Calu3 (cell line): ENCODE measurements at regions of chr18 and their contacts with region 1.

Region 1: GRCh38 chr18:35730691-35731370 is 149.3 kb downstream of the GALNT1 start:
- DNase-seq: peak; percentile 23
- H3K4me3 Mint-ChIP-seq: peak overlapping the region; percentile 66
- H3K27ac Mint-ChIP-seq: peak overlapping the region; percentile 55
- H3K4me1 Mint-ChIP-seq: peaks cover 32% of the 10 kb centered on the region
- H3K27me3 Mint-ChIP-seq: no peaks in the 10 kb centered on the region
- CTCF ChIP-seq: no peak

Region 2: GRCh38 chr18:35296060-35296459 is 434.8 kb before region 1 on chr18:
- CTCF ChIA-PET with region 1: no interaction called
- intact Hi-C with region 1: no loop called
- DNase-seq: no peak
- H3K4me3 Mint-ChIP-seq: no peak overlapping the region
- H3K27ac Mint-ChIP-seq: no peak overlapping the region
- H3K4me1 Mint-ChIP-seq: peaks cover 10% of the 10 kb centered on the region
- H3K27me3 Mint-ChIP-seq: no peaks in the 10 kb centered on the region
- CTCF ChIP-seq: no peak

Region 3: DNA sequence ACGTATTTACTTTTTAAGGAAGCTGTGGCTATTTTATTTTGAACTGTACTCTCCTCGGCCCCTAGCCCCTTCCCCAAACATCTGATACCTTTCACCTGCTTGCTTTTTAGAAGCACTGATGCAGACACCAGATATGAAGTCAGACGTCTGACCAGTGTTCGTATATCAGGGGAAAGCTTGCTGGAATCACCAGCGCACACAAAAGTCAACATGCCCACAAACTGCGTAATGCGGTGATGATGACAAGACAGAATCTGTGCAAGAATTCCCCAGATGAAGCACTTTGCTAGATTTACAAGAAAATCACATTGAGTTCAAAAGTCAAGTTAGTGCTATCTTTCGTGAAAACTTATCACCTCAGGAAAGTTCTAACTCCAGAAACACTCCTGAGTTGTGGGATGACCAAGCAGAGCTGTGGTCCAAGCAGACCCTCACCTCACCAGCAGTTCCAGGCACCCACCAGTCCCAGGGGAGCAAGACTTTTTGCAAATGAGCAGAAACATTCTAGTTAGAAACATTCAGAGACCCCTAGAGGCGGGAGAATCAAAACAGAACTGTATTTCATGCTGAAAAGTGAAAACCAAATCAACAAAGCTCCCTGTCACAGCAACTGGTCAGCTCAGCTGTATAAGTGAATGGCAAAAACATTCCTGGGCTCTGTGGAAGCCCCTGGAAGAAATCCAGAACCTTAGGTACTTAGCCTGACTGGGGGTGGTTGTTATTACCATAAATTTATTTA is 288.8 kb before region 1 on chr18:
- CTCF ChIA-PET with region 1: interaction called, 10 read pairs
- intact Hi-C with region 1: no loop called
- DNase-seq: no peak
- H3K4me3 Mint-ChIP-seq: no peak overlapping the region
- H3K27ac Mint-ChIP-seq: no peak overlapping the region
- H3K4me1 Mint-ChIP-seq: peaks cover 12% of the 10 kb centered on the region
- H3K27me3 Mint-ChIP-seq: no peaks in the 10 kb centered on the region
- CTCF ChIP-seq: no peak

Region 4: GRCh38 chr18:35688757-35689156 is 42.1 kb before region 1 on chr18:
- CTCF ChIA-PET with region 1: no interaction called
- intact Hi-C with region 1: no loop called
- DNase-seq: no peak
- H3K4me3 Mint-ChIP-seq: no peak overlapping the region
- H3K27ac Mint-ChIP-seq: no peak overlapping the region
- H3K4me1 Mint-ChIP-seq: peaks cover 7% of the 10 kb centered on the region
- H3K27me3 Mint-ChIP-seq: no peaks in the 10 kb centered on the region
- CTCF ChIP-seq: no peak

Region 5: GRCh38 chr18:35998967-35999366 is 268.1 kb after region 1 on chr18:
- CTCF ChIA-PET with region 1: no interaction called
- intact Hi-C with region 1: no loop called
- DNase-seq: no peak
- H3K4me3 Mint-ChIP-seq: no peak overlapping the region
- H3K27ac Mint-ChIP-seq: peak overlapping the region; percentile 16
- H3K4me1 Mint-ChIP-seq: no peaks in the 10 kb centered on the region
- H3K27me3 Mint-ChIP-seq: no peaks in the 10 kb centered on the region
- CTCF ChIP-seq: peak; percentile 37